Adrenal gland (tissue), 19 donors: ENCODE measurements at regions of chr7 and their contacts with region 1.

Region 1: DNA sequence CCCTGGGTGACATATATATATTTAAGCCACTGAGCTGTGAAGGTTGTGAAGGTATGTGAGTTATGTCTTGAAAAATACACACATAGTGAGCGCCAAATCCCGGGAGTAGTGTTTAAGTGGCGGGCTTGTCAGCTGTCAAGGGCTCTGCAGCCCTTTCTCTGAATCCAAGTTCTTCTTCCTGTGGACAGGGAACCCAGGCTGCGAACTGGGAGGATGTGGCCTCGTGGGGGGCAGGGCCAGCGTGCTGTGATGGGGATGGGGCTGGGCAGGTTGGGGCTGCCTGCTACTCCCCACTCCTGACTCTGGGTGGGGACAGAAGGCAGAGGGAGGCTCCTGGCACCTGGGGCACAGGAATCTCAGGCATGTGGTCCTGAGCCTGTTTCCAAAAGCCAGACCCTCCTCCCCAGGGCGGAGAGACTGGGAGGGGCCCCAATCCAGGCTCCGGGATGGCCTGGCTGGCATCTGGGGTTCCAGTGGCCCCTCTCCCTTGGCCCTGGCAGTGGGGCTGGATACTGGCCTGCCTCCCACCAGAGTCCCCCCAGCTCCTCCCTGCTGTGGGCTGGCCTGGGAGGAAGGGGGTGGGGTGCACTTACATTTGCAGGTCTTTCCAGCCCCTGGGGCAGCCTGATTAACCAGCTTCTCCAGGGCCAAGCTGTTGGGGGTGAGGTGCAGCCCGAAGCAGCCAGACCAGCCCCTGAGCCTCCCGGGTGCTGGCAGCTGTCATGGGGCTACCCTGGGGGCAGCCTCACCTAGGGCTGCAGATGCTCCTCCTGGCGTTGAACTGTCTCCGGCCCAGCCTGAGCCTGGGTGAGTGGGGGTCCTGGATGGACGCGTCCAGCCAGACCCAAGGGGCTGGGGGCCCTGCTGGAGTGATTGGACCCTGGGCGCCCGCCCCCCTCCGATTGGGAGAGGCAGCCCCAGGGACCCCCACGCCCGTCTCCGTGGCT is at the start of gene UPK3B:
- DNase-seq: peak in 1 of 7 donors; percentile 14
- H3K4me3 ChIP-seq: no peak within 1 kb of the TSS
- H3K27ac ChIP-seq: no peak within 1 kb of the TSS
- H3K4me1 ChIP-seq: peaks cover 6 to 8% of the 10 kb centered on the region in 2 donors
- H3K27me3 ChIP-seq: no peaks in the 10 kb centered on the region
- CTCF ChIP-seq: no peak
- POLR2A ChIP-seq: no peak
- total RNA-seq, gene UPK3B: 0.22 to 2.6 (median 0.89) TPM in 8 of 9 donors, not detected in the other

Region 2: DNA sequence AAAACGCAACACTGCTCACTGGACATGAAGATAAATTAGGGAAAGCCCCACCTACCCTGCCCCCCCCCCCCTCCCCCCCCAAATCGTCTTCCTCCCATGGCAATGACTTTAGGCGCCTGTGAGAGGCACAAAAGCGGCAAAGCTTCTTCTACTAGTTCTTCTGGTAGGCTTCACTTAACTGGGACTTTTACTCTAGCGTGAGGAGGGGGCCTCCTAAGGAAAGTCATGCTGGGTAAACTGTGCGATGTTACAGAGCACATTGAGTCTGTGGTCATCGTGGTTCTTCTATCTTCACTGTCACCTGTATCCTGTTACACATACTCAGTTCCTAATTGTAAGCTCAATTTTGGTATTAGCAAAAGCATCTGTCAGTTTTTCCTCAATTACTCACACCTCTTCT is 182.6 kb before region 1 on chr7:
- intact Hi-C with region 1: no loop called
- DNase-seq: no peak
- H3K4me3 ChIP-seq: no peak overlapping the region
- H3K27ac ChIP-seq: peak overlapping the region in 1 of 5 donors; percentile 54
- H3K4me1 ChIP-seq: peaks cover 14 to 46% of the 10 kb centered on the region in 2 donors
- H3K27me3 ChIP-seq: no peaks in the 10 kb centered on the region
- CTCF ChIP-seq: no peak
- POLR2A ChIP-seq: no peak

Region 3: GRCh38 chr7:76997381-76997780 is 487.2 kb after region 1 on chr7:
- intact Hi-C with region 1: loop called (anchors 10 kb)
- DNase-seq: no peak
- H3K4me3 ChIP-seq: no peak overlapping the region
- H3K27ac ChIP-seq: no peak overlapping the region
- H3K4me1 ChIP-seq: no peaks in the 10 kb centered on the region
- H3K27me3 ChIP-seq: no peaks in the 10 kb centered on the region
- CTCF ChIP-seq: no peak
- POLR2A ChIP-seq: no peak